Breast epithelium (tissue), 4 donors: ENCODE measurements at regions of chr2 and their contacts with region 1.

Region 1: GRCh38 chr2:42176992-42177738 is 8.0 kb downstream of the EML4 start:
- DNase-seq: no peak
- H3K4me3 ChIP-seq: no peak overlapping the region
- H3K27ac ChIP-seq: no peak overlapping the region
- H3K4me1 ChIP-seq: no peaks in the 10 kb centered on the region
- H3K27me3 ChIP-seq: no peaks in the 10 kb centered on the region
- CTCF ChIP-seq: no peak
- POLR2A ChIP-seq: no peak

Region 2: DNA sequence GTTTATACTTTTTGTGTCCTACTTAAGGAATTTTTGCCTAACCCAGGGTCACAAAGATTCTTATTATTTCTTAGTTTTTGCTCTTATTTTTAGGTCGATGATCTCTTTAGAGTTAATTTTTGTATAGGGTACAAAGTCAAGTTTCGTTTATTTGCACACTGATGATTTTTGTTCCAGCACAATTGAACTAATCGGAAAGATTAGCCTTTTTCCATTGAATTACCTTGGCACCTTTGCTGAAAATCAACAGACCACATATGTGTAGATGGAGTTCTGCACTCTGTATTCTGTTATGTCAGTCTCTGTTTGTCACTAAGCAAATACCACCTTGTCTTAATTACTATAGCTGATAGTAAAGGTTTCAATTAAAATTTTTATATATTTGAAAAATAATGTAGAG is 10.7 kb after region 1 on chr2:
- intact Hi-C with region 1: loop called (anchors 1 kb)
- DNase-seq: no peak
- H3K4me3 ChIP-seq: no peak overlapping the region
- H3K27ac ChIP-seq: no peak overlapping the region
- H3K4me1 ChIP-seq: no peaks in the 10 kb centered on the region
- H3K27me3 ChIP-seq: no peaks in the 10 kb centered on the region
- CTCF ChIP-seq: no peak
- POLR2A ChIP-seq: no peak